Sigmoid colon (tissue), 7 donors: ENCODE measurements at regions of chr19 and their contacts with region 1.

Region 1: GRCh38 chr19:13207846-13208671 is 57.8 kb downstream of the IER2 start:
- DNase-seq: peak; percentile 74
- H3K4me3 ChIP-seq: peak overlapping the region; percentile 33 to 54 (median 48)
- H3K27ac ChIP-seq: peak overlapping the region; percentile 53 to 68 (median 60)
- H3K4me1 ChIP-seq: peaks cover 0 to 15% (median 4%) of the 10 kb centered on the region in 4 donors
- H3K27me3 ChIP-seq: peaks cover 0 to 4% (median 0%) of the 10 kb centered on the region in 3 donors
- CTCF ChIP-seq: no peak
- EP300 ChIP-seq: no peak
- POLR2A ChIP-seq: no peak

Region 2: DNA sequence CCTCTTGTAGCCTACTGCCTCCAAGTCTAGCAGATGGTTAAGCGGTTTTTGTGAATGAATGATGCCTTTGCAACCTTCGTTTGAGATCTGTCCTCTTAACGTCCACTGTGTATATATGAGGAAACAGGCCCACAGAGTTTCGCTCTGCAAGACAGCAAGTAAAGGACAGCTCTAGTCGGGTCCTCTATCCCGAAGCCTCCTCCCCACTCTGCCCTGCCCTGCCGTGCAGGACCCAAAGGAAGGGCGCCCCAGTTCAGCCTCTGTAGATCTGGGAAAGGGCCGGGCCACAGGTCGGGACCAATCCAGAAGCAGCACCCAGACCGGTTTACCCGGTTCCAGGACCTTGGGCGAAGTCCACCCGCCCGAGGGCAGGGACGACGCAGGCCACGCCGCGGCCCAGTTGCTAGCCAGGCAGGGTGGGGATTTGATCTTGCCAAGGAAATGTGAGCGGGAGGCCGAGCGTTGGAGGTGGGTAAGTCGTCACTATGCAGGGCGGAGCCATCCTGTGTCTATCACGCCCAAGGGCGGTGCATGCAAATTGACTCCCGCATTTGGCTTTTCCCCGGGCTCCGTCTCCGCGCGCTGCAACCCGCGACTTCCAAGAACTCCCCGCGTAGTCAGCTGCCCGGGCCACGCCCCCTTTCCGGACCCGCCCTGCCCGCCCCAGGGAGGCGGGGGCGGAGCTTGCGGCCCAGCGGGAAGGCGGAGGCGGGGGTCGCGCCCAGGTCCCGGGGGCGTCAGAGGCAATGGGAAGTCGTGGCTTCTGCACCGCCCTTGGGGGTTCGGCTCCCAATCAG is 45.3 kb before region 1 on chr19:
- intact Hi-C with region 1: loop called (anchors 5 kb)
- DNase-seq: peak; percentile 99
- H3K4me3 ChIP-seq: peak overlapping the region; percentile 25 to 47 (median 44)
- H3K27ac ChIP-seq: peak overlapping the region; percentile 91 to 94 (median 94)
- H3K4me1 ChIP-seq: peaks cover 0 to 41% (median 35%) of the 10 kb centered on the region in 4 donors
- H3K27me3 ChIP-seq: no peaks in the 10 kb centered on the region
- CTCF ChIP-seq: no peak
- EP300 ChIP-seq: peak in 1 of 4 donors; percentile 71
- POLR2A ChIP-seq: peak in 1 of 2 donors; percentile 64

Region 3: DNA sequence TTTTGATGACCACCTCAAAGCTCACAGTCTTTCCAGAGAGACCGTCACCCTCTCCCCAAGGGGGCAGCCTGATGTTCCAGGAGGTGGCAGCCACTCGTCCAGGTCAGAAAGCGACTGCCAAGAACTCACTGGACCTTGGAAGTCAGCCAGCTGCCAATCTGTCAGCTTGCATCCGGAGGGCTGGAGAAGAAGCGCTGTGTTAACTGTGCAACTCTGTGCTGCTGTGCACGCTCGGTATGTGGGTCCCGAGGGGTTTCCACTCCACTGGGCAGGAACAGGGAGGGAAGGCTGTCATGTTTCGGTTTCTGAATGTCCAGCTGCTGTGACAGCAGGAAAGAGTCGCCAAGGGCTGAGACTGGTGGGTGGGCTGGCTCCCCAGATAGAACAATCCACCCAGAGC is 209.0 kb after region 1 on chr19:
- intact Hi-C with region 1: no loop called
- DNase-seq: no peak
- H3K4me3 ChIP-seq: no peak overlapping the region
- H3K27ac ChIP-seq: no peak overlapping the region
- H3K4me1 ChIP-seq: no peaks in the 10 kb centered on the region
- H3K27me3 ChIP-seq: no peaks in the 10 kb centered on the region
- CTCF ChIP-seq: no peak
- EP300 ChIP-seq: no peak
- POLR2A ChIP-seq: no peak